ENCODE measurements at regions of chr19 and their contacts with region 1.

Region 1: DNA sequence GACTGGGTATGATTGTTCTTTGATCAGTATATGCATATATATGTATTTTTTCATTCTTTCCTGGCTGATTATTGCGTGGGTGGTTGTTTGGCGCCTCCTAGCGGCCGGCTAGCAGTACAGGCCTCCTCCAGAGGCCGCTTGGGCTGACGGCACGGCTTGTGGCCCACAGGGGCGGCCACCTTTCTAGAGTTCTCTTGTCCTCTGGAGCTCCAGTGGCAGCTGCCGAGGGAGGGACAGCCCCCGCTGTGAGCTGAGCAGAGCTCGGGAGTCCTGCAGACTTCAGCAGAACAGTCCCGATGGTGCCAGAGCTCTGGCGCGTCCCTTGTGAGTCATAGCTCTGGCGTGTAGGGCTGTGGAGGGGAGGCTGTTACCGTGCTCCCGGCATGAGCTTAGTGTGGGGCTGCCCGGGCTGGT is 22.5 kb upstream of the ZNF429 start:
- DNase-seq: peak; percentile 79
- H3K4me3 Mint-ChIP-seq: no peak overlapping the region
- H3K27ac Mint-ChIP-seq: no peak overlapping the region
- H3K4me1 Mint-ChIP-seq: peaks cover 3% of the 10 kb centered on the region
- H3K27me3 Mint-ChIP-seq: no peaks in the 10 kb centered on the region

Region 2: GRCh38 chr19:20247016-20247683 is 1235.7 kb before region 1 on chr19:
- CTCF ChIA-PET with region 1: no interaction called
- intact Hi-C with region 1: loop called (anchors 2 kb)
- DNase-seq: peak; percentile 61
- H3K4me3 Mint-ChIP-seq: no peak overlapping the region
- H3K27ac Mint-ChIP-seq: no peak overlapping the region
- H3K4me1 Mint-ChIP-seq: peaks cover 4% of the 10 kb centered on the region
- H3K27me3 Mint-ChIP-seq: no peaks in the 10 kb centered on the region

Region 3: GRCh38 chr19:20999731-21000352 is 483.0 kb before region 1 on chr19:
- CTCF ChIA-PET with region 1: no interaction called
- intact Hi-C with region 1: loop called (anchors 5 kb)
- DNase-seq: peak; percentile 96
- H3K4me3 Mint-ChIP-seq: peak overlapping the region; percentile 97
- H3K27ac Mint-ChIP-seq: peak overlapping the region; percentile 87
- H3K4me1 Mint-ChIP-seq: peaks cover 3% of the 10 kb centered on the region
- H3K27me3 Mint-ChIP-seq: no peaks in the 10 kb centered on the region

Region 4: DNA sequence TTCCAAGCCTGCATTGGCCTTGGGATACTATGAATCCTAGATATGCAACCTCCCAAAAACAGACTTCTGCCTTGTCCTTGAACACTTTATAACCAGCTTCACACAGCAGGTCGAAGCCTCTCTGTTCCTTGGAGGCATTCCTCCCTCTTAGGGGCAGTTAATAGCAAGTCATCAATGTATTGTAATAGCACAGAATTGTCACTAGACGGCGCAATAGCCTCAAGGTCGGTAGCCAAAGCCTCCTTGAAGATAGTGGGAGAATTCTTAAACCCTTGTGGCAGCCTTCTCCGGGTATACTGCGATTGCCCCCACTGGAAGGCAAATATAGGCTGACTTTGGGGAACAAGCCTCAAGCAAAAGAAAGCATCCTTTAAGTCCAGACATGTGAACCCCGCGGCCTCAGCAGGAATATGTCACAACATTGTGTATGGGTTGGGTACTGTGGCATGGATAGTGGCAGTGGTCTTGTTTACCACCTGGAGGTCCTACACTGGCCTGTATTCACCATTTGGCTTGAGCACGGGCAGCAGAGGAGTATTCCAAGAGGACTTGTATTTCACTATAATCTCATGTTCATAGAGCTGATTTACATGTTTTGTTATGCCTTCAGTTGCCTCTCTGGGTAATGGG is 279.9 kb before region 1 on chr19:
- CTCF ChIA-PET with region 1: interaction called, 13 read pairs
- intact Hi-C with region 1: loop called (anchors 1 kb)
- DNase-seq: peak; percentile 48
- H3K4me3 Mint-ChIP-seq: no peak overlapping the region
- H3K27ac Mint-ChIP-seq: no peak overlapping the region
- H3K4me1 Mint-ChIP-seq: no peaks in the 10 kb centered on the region
- H3K27me3 Mint-ChIP-seq: peaks cover 10% of the 10 kb centered on the region

Region 5: GRCh38 chr19:21454901-21455300 is 28.0 kb before region 1 on chr19:
- CTCF ChIA-PET with region 1: no interaction called
- intact Hi-C with region 1: no loop called
- DNase-seq: no peak
- H3K4me3 Mint-ChIP-seq: no peak overlapping the region
- H3K27ac Mint-ChIP-seq: no peak overlapping the region
- H3K4me1 Mint-ChIP-seq: no peaks in the 10 kb centered on the region
- H3K27me3 Mint-ChIP-seq: no peaks in the 10 kb centered on the region

Region 6: GRCh38 chr19:21492947-21493906 is 10.4 kb after region 1 on chr19:
- CTCF ChIA-PET with region 1: interaction called, 13 read pairs
- intact Hi-C with region 1: no loop called
- DNase-seq: no peak
- H3K4me3 Mint-ChIP-seq: no peak overlapping the region
- H3K27ac Mint-ChIP-seq: no peak overlapping the region
- H3K4me1 Mint-ChIP-seq: no peaks in the 10 kb centered on the region
- H3K27me3 Mint-ChIP-seq: no peaks in the 10 kb centered on the region

Region 7: DNA sequence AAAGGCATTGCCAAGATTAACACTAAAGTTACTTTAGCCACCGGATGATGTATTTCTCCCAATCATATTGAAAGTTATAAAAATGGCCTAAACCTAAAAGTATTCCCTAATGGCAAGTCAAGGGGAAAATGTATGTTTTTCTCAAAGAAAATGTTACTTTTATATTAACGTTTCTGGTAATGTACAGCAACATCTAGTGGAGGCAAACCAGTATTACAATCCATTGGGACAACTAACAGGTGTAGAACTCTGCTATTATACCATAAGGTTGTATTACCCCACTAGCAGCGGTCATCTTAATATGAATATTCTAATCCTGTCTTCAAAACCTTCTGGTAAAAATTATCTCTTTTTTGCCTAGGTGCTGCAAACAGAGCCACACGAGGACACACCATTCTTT is 215.3 kb after region 1 on chr19:
- CTCF ChIA-PET with region 1: interaction called, 6 read pairs
- intact Hi-C with region 1: loop called (anchors 1 kb)
- DNase-seq: no peak
- H3K4me3 Mint-ChIP-seq: no peak overlapping the region
- H3K27ac Mint-ChIP-seq: no peak overlapping the region
- H3K4me1 Mint-ChIP-seq: no peaks in the 10 kb centered on the region
- H3K27me3 Mint-ChIP-seq: no peaks in the 10 kb centered on the region